CD4-positive, alpha-beta memory T cell (primary cell): ENCODE measurements at regions of chr4 and their contacts with region 1.

Region 1: DNA sequence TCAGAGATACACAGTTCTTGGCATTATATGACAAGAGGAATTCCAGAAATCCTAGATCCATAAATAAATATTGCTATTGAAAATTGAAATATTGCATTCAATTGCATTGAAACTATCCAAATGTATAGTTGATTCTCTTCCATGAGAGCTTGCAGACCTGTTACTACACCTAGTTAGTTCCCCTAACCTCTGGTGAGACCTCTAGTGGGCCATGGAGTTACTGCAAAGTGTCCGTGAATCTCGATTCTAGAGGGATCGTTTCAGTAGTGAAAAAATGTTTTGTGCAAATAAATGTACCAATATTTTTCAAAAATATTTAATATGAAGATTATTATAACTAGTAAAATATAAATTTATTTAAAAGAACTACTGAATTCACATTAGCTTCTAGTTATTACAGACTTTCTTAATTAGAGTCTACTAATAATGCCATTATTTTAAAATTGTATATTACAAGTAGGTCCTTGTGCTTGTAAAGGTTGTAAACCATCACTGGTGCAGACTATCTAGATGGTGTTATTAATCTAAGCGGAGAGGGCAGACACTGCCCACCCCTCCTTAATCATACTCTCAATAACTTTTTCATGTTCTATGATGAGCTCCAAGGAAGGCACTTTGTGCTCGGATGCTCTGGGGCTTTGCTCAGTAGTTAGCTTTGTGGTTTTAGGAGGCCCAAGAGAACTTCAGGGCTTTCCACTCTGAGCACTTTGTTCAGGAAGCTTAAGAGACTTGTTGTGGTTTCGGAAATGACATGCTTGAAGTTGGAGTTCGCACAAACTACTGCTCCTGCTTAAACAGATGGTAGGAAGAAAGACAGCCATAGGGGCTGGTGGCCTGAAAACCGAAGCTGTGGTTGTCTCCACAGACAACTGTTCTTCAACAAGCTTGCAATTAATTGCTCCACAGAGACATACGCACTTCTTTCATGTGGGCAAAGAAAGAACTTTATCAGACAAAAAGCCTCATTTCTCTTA is 42.8 kb downstream of the IL21 start:
- DNase-seq: peak; percentile 84 to 93 (median 87)
- H3K4me3 ChIP-seq: peak overlapping the region in 1 of 2 donors; percentile 12
- H3K4me3 Mint-ChIP-seq: peak overlapping the region; percentile 69 to 85 (median 78)
- H3K27ac ChIP-seq: peak overlapping the region; percentile 60
- H3K27ac Mint-ChIP-seq: peak overlapping the region; percentile 84 to 98 (median 96)
- H3K4me1 ChIP-seq: peaks cover 32% of the 10 kb centered on the region
- H3K4me1 Mint-ChIP-seq: peaks cover 29 to 49% (median 34%) of the 10 kb centered on the region in 4 donors
- H3K27me3 ChIP-seq: no peaks in the 10 kb centered on the region
- H3K27me3 Mint-ChIP-seq: no peaks in the 10 kb centered on the region

Region 2: GRCh38 chr4:121950212-121950679 is 627.8 kb before region 1 on chr4:
- CTCF ChIA-PET with region 1: interaction called, 38 read pairs
- POLR2A ChIA-PET with region 1: interaction called, 5 read pairs
- intact Hi-C with region 1: loop called (anchors 1 kb)
- DNase-seq: peak; percentile 74 to 82 (median 77)
- H3K4me3 ChIP-seq: peak overlapping the region; percentile 68 to 71
- H3K4me3 Mint-ChIP-seq: peak overlapping the region; percentile 83 to 96 (median 88)
- H3K27ac ChIP-seq: no peak overlapping the region
- H3K27ac Mint-ChIP-seq: peak overlapping the region in 6 of 7 donors; percentile 17 to 77 (median 53)
- H3K4me1 ChIP-seq: peaks cover 21% of the 10 kb centered on the region
- H3K4me1 Mint-ChIP-seq: peaks cover 7 to 23% (median 19%) of the 10 kb centered on the region in 4 donors
- H3K27me3 ChIP-seq: no peaks in the 10 kb centered on the region
- H3K27me3 Mint-ChIP-seq: peaks cover 0 to 12% of the 10 kb centered on the region in 2 donors

Region 3: GRCh38 chr4:122224348-122224747 is 353.7 kb before region 1 on chr4:
- CTCF ChIA-PET with region 1: interaction called, 3 read pairs
- POLR2A ChIA-PET with region 1: no interaction called
- intact Hi-C with region 1: loop called (anchors 5 kb)
- DNase-seq: no peak
- H3K4me3 ChIP-seq: no peak overlapping the region
- H3K4me3 Mint-ChIP-seq: no peak overlapping the region
- H3K27ac ChIP-seq: no peak overlapping the region
- H3K27ac Mint-ChIP-seq: peak overlapping the region in 2 of 7 donors; percentile 46 to 56
- H3K4me1 ChIP-seq: peaks cover 22% of the 10 kb centered on the region
- H3K4me1 Mint-ChIP-seq: peaks cover 13 to 23% (median 21%) of the 10 kb centered on the region in 4 donors
- H3K27me3 ChIP-seq: no peaks in the 10 kb centered on the region
- H3K27me3 Mint-ChIP-seq: no peaks in the 10 kb centered on the region

Region 4: DNA sequence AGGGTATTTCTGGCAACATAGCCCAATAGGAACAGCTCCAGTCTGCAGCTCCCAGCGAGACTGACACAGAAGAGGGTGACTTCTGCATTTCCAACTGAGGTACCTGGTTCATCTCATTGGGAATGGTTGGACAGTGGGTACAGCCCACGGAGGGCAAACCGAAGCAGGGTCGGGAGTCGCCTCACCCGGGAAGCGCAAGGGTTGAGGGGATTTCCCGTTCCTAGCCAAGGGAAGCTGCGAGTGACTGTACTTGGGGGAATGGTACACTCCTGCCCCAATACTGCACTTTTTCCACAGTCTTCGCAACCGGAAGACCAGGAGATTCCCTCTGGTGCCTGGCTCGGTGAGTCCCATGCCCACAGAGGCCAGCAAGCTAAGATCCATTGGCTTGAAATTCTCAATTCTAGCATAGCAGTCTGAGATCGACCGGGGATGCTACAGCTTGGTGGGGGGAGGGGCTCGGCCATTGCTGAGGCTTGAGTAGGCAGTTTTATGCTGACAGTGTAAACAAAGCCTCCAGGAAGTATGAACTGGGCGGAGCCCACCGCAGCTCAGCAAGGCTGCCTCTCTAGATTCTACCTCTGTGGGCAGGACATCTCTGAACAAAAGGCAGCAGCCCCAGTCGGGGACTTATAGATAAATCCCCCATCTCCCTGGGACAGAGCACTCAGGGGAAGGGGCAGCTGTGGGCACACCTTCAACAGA is 213.2 kb before region 1 on chr4:
- CTCF ChIA-PET with region 1: interaction called, 4 read pairs
- POLR2A ChIA-PET with region 1: no interaction called
- intact Hi-C with region 1: loop called (anchors 5 kb)
- DNase-seq: peak; percentile 3 to 37 (median 35)
- H3K4me3 ChIP-seq: no peak overlapping the region
- H3K4me3 Mint-ChIP-seq: peak overlapping the region in 6 of 8 donors; percentile 7 to 52 (median 17)
- H3K27ac ChIP-seq: no peak overlapping the region
- H3K27ac Mint-ChIP-seq: peak overlapping the region in 1 of 7 donors; percentile 53
- H3K4me1 ChIP-seq: peaks cover 13% of the 10 kb centered on the region
- H3K4me1 Mint-ChIP-seq: peaks cover 5 to 22% (median 9%) of the 10 kb centered on the region in 4 donors
- H3K27me3 ChIP-seq: no peaks in the 10 kb centered on the region
- H3K27me3 Mint-ChIP-seq: no peaks in the 10 kb centered on the region

Region 5: DNA sequence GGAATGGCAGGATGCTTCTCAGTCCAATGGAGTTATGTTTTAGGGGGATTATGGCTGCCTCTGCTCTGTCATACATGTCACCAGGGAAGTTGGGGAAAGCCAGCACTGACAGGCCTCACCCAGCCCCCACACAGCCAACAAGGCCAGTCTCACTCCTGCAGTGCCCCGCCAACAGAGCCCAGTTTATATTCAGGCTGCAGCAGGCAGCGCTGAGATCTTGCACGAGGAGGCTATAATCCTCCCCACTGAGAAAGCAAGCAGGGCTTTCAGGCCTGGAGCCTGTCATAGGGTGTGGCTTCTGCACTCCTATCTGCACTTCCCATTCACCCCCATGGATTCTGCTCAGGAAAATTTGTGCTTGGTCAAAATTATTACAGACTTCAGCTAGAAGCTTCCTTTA is 174.2 kb before region 1 on chr4:
- CTCF ChIA-PET with region 1: no interaction called
- POLR2A ChIA-PET with region 1: no interaction called
- intact Hi-C with region 1: no loop called
- DNase-seq: no peak
- H3K4me3 ChIP-seq: no peak overlapping the region
- H3K4me3 Mint-ChIP-seq: no peak overlapping the region
- H3K27ac ChIP-seq: no peak overlapping the region
- H3K27ac Mint-ChIP-seq: no peak overlapping the region
- H3K4me1 ChIP-seq: no peaks in the 10 kb centered on the region
- H3K4me1 Mint-ChIP-seq: no peaks in the 10 kb centered on the region
- H3K27me3 ChIP-seq: no peaks in the 10 kb centered on the region
- H3K27me3 Mint-ChIP-seq: peaks cover 0 to 1% of the 10 kb centered on the region in 2 donors

Region 6: DNA sequence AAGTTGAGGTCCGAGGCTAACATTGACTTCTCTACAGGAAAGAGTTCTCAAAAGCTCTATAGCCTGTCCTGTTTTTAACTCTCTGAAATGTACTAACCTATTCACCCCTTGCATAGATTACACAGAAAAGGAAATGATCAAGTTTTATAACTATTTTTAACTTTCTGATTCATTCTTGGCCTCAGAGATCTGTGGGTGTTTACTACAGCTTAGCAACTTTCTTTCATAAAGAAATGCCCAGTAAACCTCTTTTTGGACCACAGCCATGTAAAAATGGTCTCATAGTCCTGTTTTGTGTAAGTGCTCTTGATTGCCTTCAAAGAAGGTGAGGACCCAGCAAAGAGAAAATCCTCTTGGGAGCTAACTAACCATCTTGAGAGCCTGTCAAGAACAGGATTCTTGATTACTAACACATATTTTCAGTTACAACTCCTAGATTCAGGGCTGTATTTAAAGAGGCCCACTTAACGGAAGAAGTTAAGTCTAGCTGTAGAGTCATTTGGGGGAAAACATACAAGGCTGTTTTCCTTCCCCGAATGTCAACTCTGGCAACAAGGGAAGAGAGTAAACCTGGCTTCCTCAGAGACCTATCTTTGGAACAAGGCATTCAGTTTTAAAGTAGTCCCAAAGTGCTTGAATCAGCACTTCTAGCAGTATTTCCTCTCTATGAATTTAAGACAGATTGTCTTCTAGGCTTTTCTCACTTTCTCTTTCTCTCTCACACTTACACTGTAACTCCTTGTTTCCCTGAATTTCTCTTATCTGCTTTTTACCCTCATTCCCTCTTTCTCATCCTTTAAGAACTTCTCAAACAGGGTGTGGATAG is 35.5 kb before region 1 on chr4:
- CTCF ChIA-PET with region 1: interaction called, 20 read pairs
- POLR2A ChIA-PET with region 1: interaction called, 4 read pairs
- intact Hi-C with region 1: no loop called
- DNase-seq: peak in 1 of 5 donors; percentile 8
- H3K4me3 ChIP-seq: no peak overlapping the region
- H3K4me3 Mint-ChIP-seq: peak overlapping the region in 6 of 8 donors; percentile 51 to 87 (median 68)
- H3K27ac ChIP-seq: no peak overlapping the region
- H3K27ac Mint-ChIP-seq: peak overlapping the region; percentile 33 to 93 (median 80)
- H3K4me1 ChIP-seq: peaks cover 43% of the 10 kb centered on the region
- H3K4me1 Mint-ChIP-seq: peaks cover 31 to 55% (median 44%) of the 10 kb centered on the region in 4 donors
- H3K27me3 ChIP-seq: no peaks in the 10 kb centered on the region
- H3K27me3 Mint-ChIP-seq: no peaks in the 10 kb centered on the region

Region 7: GRCh38 chr4:122612540-122612939 is 34.4 kb after region 1 on chr4:
- CTCF ChIA-PET with region 1: no interaction called
- POLR2A ChIA-PET with region 1: no interaction called
- intact Hi-C with region 1: no loop called
- DNase-seq: no peak
- H3K4me3 ChIP-seq: no peak overlapping the region
- H3K4me3 Mint-ChIP-seq: no peak overlapping the region
- H3K27ac ChIP-seq: no peak overlapping the region
- H3K27ac Mint-ChIP-seq: no peak overlapping the region
- H3K4me1 ChIP-seq: peaks cover 13% of the 10 kb centered on the region
- H3K4me1 Mint-ChIP-seq: peaks cover 8 to 13% (median 12%) of the 10 kb centered on the region in 4 donors
- H3K27me3 ChIP-seq: no peaks in the 10 kb centered on the region
- H3K27me3 Mint-ChIP-seq: peaks cover 0 to 5% of the 10 kb centered on the region in 2 donors

Region 8: GRCh38 chr4:122716825-122717448 is 138.8 kb after region 1 on chr4:
- CTCF ChIA-PET with region 1: interaction called, 10 read pairs
- POLR2A ChIA-PET with region 1: no interaction called
- intact Hi-C with region 1: loop called (anchors 1 kb)
- DNase-seq: peak; percentile 61 to 67 (median 65)
- H3K4me3 ChIP-seq: no peak overlapping the region
- H3K4me3 Mint-ChIP-seq: no peak overlapping the region
- H3K27ac ChIP-seq: no peak overlapping the region
- H3K27ac Mint-ChIP-seq: peak overlapping the region in 3 of 7 donors; percentile 1 to 63 (median 28)
- H3K4me1 ChIP-seq: peaks cover 5% of the 10 kb centered on the region
- H3K4me1 Mint-ChIP-seq: peaks cover 0 to 5% (median 2%) of the 10 kb centered on the region in 4 donors
- H3K27me3 ChIP-seq: no peaks in the 10 kb centered on the region
- H3K27me3 Mint-ChIP-seq: no peaks in the 10 kb centered on the region